Activated CD8-positive, alpha-beta T cell treated with anti-CD3 and anti-CD28 coated beads, Interleukin-2, amount 10 ng/mL, durations not matched to agents 7 days and 5 days (primary cell): ENCODE measurements at regions of chr11 and their contacts with region 1.

Region 1: DNA sequence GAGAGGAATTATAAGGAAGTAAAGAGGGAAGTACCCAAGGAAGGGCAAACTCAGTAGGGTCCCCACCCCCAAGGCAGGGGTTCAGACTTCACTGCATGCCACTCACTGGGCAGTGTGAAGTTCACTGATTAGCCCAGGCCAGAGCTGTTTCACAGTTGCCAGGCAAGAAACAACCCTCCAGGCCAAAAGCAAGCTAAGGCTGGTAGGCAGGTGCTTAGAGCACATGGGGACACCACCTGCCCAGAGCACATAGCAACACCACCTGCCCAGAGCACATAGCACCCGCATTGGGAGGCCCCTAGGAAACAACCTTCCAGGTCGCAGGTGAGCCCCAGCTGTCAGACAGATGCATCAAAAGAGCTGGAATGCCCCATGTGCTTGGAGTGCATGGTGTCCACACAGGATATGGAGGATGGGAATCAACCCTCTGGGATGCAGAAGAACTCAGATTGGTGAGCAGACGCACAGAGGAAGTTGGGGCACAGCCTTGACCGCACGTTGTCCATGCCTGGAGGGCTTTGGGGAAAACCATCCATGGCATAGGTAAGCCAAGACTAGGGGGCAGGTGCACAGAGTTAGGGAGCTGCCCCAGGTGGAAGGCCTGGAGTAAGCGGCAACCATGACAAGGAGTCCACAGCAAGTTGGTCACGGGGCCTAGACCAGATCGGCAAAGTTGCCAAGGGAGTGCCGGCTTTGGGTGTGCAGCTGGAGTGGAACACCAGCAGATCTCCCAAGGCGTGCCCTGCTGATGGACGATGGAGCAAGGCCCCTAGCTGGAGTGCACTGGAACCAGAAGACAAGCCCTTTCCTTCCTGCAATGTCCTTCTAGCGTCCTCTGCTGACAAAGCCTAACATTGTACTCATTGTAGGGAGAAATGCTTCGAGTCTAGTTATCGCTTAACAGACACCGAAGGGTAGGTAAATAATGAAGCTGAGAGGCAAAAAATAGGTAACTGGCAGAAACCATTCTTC is 7.8 kb upstream of the TMEM216 start:
- DNase-seq: no peak
- ATAC-seq: no peak
- H3K4me3 Mint-ChIP-seq: no peak overlapping the region
- H3K27ac Mint-ChIP-seq: no peak overlapping the region
- H3K4me1 Mint-ChIP-seq: peaks cover 7% of the 10 kb centered on the region
- H3K27me3 Mint-ChIP-seq: peaks cover 3% of the 10 kb centered on the region

Region 2: GRCh38 chr11:61254403-61255025 is 130.0 kb before region 1 on chr11:
- CTCF ChIA-PET with region 1: interaction called, 49 read pairs
- POLR2A ChIA-PET with region 1: no interaction called
- DNase-seq: peak; percentile 78
- ATAC-seq: peak; percentile 96
- H3K4me3 Mint-ChIP-seq: no peak overlapping the region
- H3K27ac Mint-ChIP-seq: no peak overlapping the region
- H3K4me1 Mint-ChIP-seq: no peaks in the 10 kb centered on the region
- H3K27me3 Mint-ChIP-seq: no peaks in the 10 kb centered on the region

Region 3: GRCh38 chr11:61325649-61326414 is 58.7 kb before region 1 on chr11:
- CTCF ChIA-PET with region 1: interaction called, 25 read pairs
- POLR2A ChIA-PET with region 1: no interaction called
- DNase-seq: no peak
- ATAC-seq: no peak
- H3K4me3 Mint-ChIP-seq: no peak overlapping the region
- H3K27ac Mint-ChIP-seq: no peak overlapping the region
- H3K4me1 Mint-ChIP-seq: peaks cover 15% of the 10 kb centered on the region
- H3K27me3 Mint-ChIP-seq: no peaks in the 10 kb centered on the region

Region 4: GRCh38 chr11:61369372-61370219 is 15.0 kb before region 1 on chr11:
- CTCF ChIA-PET with region 1: interaction called, 65 read pairs
- POLR2A ChIA-PET with region 1: interaction called, 5 read pairs
- DNase-seq: no peak
- ATAC-seq: no peak
- H3K4me3 Mint-ChIP-seq: no peak overlapping the region
- H3K27ac Mint-ChIP-seq: peak overlapping the region; percentile 18
- H3K4me1 Mint-ChIP-seq: peaks cover 14% of the 10 kb centered on the region
- H3K27me3 Mint-ChIP-seq: no peaks in the 10 kb centered on the region

Region 5: DNA sequence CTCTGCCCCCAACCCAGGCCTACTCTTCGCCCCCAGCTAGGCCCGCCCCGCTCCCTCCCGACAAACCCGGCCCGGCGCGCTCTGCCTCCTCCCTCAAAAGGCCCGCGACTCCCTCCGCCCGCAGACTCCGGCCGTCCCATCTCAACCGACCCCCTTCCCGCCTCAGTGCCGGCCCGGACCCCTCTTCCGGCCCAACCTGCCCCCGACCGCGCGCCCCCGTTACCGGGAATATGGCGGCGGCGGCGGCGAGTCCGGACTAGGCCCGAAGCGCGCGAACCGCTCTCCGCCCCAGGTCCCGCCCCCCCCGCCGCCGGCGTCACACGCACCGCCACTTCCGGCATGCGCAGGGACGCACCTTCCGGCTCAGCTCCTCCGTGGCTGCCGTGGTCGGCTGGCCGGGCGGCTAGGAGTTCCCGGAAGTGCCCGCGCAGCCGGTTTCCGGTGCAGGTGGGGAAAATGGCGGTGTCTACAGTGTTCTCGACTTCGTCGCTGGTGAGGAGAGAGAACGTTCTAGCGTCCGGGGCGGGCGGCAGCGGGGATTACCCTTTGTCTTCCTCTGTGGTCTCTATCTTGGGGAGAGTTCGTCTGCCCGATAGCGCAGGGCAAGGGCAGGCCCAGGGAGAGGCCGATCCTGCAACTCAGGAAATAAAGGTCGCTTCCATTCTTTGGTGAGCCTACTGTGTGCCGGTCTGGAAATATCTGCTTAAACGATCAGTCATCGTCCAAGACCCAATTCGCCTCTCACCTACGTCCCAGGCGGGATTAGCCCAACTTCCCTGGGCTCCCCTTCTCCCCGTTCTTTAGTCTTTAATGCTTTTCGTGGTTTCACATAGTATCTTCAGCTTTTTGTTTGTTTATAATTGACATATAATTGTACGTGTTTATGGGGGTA is 45.4 kb after region 1 on chr11 and contains the starts of genes CPSF7 and SDHAF2:
- CTCF ChIA-PET with region 1: interaction called, 15 read pairs
- POLR2A ChIA-PET with region 1: interaction called, 7 read pairs
- DNase-seq: peak; percentile 98
- ATAC-seq: peak; percentile 93
- H3K4me3 Mint-ChIP-seq: peak within 1 kb of the TSS; percentile 99
- H3K27ac Mint-ChIP-seq: peak within 1 kb of the TSS; percentile 100
- H3K4me1 Mint-ChIP-seq: peaks cover 56% of the 10 kb centered on the region
- H3K27me3 Mint-ChIP-seq: no peaks in the 10 kb centered on the region
- total RNA-seq, gene CPSF7: 94.8 to 98.4 TPM
- total RNA-seq, gene SDHAF2: 51.6 to 54.3 TPM

Region 6: DNA sequence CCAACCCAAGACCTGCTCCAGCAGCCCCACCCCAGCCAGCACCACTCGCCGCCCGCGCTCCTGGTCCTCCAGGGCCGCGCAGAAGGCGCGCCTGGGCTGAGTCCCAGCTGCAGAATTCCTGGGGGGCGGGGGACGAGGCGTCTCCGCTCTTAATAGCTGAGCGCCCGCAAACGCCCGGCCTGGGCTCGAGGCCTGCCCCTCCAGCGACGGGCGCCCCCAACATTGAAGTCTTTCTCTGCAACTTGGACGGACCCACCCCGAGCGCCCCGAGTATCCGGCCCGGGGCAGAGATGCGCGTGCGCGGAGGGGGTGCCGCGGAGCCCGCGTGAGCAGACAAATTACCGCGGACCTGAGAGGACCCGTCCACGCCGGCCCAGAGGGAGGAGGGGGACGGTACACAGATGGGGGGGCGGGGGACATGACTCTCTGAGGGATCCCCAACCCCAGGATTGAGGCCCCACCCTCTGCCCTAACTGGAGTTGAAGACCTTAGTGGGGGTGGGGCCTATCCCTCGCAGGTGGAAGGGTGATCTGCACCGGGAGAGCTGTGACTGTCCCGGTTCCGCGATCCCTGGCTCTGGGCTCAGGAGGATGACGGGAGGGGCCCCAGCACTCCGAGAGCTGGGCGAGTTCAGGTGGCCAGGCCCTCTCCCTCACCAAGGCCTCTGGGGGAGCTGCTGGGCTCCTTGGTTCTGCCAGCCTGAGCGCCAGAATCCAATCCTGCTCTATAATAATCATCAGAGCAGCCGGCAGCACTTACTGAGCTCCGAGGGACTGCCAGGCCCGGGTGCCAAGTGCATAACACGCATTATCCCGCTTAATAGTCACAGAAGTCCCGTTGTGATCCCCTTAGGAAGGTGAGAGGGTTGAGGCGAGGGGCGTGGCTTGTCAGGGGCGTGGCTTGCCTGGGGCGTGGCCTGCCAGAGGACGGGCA is 203.2 kb after region 1 on chr11:
- CTCF ChIA-PET with region 1: no interaction called
- POLR2A ChIA-PET with region 1: no interaction called
- DNase-seq: peak; percentile 42
- ATAC-seq: peak; percentile 55
- H3K4me3 Mint-ChIP-seq: no peak overlapping the region
- H3K27ac Mint-ChIP-seq: no peak overlapping the region
- H3K4me1 Mint-ChIP-seq: peaks cover 8% of the 10 kb centered on the region
- H3K27me3 Mint-ChIP-seq: peaks cover 45% of the 10 kb centered on the region

Region 7: GRCh38 chr11:61733120-61733978 is 348.8 kb after region 1 on chr11:
- CTCF ChIA-PET with region 1: no interaction called
- POLR2A ChIA-PET with region 1: no interaction called
- DNase-seq: peak; percentile 88
- ATAC-seq: peak; percentile 96
- H3K4me3 Mint-ChIP-seq: no peak overlapping the region
- H3K27ac Mint-ChIP-seq: no peak overlapping the region
- H3K4me1 Mint-ChIP-seq: peaks cover 2% of the 10 kb centered on the region
- H3K27me3 Mint-ChIP-seq: no peaks in the 10 kb centered on the region